ENCODE measurements at regions of chr10 and their contacts with region 1.

Region 1: DNA sequence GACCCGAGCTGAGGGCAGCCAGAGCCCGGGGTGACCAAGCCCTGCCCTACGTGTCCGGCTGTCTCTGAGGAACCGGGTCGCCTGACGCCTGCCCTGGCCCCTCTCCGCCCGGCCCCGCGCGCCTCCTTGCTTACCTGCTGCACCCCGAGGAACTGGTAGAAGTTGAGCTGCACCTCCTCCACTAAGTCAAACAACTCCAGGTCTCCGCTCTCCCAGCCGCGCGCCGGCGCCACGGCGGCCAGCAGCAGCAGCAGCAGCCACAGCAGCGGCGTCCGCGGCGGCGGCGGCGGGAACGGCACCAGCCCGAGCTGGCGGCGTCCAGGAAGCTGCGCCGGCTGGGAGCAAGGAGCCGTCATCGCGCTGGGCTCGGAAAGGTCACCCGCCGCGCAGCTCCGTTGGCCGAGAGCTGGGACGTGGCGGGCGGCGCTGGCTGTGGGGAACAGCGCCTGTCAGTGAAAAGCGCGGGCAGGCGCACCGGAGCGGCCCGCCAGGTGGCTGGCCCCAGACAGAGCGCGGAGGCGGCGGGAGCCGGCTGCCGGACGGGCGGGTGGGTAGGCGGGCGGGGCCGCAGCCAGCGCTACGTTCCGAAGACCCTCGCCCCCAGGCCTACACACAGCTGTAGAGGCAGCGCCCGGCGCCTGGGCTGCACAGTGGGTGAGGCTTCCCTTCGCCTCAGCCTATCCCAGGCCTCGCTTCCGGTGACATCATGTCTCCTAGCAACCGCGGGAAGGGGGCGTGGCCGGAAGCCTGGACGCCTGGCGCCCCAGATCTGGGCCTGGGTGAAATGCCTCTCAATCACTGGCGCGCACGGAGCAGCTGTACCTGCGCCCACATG is at the start of gene DNAJC1:
- DNase-seq: peak; percentile 98
- H3K4me3 ChIP-seq: peak within 1 kb of the TSS; percentile 94
- H3K27ac ChIP-seq: peak within 1 kb of the TSS; percentile 90
- H3K4me1 ChIP-seq: peaks cover 17% of the 10 kb centered on the region
- H3K27me3 ChIP-seq: no peaks in the 10 kb centered on the region
- total RNA-seq, gene DNAJC1: 50.9 and 218 TPM in 2 replicates

Region 2: DNA sequence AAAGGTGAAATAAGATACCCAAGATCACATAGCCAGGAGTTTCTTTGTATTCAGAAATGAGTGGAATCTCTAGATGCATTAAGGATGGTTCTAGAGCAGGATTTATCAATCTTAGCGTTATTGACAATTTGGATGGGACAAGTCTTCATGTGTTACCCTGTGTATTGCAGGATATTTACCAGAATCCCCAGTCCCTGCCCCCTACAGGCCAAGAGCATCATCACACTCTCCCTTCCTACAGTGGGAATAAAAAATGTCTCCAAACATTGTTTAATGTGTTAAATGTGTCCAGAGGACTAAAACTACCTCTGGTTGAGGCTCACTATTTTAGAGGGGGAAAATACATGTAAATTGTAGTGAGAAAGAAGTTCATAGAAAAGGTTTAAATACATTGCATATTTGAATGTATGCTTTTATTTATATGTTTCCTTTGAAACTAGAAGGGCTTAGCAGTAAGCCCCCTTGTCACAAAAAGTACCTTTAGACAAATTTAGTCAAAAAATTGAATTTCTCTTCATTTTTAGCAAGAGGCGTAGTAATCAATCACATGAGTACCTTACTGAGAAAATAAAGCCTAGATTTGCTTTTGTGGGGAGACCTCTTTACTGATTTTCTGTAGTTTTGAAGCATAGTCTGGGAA is 328.0 kb before region 1 on chr10:
- in situ Hi-C with region 1: no loop called
- DNase-seq: peak; percentile 51
- H3K4me3 ChIP-seq: no peak overlapping the region
- H3K27ac ChIP-seq: no peak overlapping the region
- H3K4me1 ChIP-seq: no peaks in the 10 kb centered on the region
- H3K27me3 ChIP-seq: no peaks in the 10 kb centered on the region

Region 3: DNA sequence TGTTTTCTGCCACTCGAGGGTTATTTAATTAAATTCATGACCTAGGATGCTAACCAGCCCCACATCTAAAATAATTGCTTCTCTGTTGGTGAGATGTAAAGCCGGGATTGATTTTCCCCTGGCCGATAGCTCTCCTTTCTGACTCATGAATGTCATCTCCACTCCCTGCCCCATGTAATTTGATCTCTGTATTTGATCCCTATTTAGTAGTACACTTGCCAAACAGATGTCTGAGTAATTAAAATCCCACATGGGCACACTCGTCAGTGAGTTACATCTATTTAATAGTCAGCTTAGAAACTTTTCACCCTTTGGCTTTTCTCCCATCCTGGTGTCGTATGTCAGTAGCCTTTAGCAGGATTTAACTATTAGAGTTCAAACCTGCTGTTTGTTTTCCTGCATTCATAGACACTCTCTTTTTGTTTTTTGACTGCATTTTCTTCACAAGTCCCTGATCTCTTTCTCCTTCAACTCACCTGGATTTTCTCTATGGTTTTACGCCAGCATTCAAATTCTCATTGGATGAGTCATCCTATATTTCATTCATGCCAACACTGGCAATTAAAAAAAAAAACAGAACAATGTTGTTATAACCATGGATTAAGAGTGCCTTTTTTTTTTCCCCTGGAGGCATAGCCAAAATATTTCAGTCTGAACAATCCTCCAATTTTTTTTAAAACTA is 424.7 kb after region 1 on chr10:
- in situ Hi-C with region 1: loop called (anchors 10 kb)
- DNase-seq: peak; percentile 91
- H3K4me3 ChIP-seq: peak overlapping the region; percentile 33
- H3K27ac ChIP-seq: peak overlapping the region; percentile 16
- H3K4me1 ChIP-seq: peaks cover 29% of the 10 kb centered on the region
- H3K27me3 ChIP-seq: no peaks in the 10 kb centered on the region

Region 4: GRCh38 chr10:22550732-22551131 is 547.4 kb after region 1 on chr10:
- in situ Hi-C with region 1: loop called (anchors 25 kb)
- DNase-seq: peak; percentile 40
- H3K4me3 ChIP-seq: no peak overlapping the region
- H3K27ac ChIP-seq: no peak overlapping the region
- H3K4me1 ChIP-seq: peaks cover 11% of the 10 kb centered on the region; the same call in 1 of the 2 replicates
- H3K27me3 ChIP-seq: no peaks in the 10 kb centered on the region

Region 5: DNA sequence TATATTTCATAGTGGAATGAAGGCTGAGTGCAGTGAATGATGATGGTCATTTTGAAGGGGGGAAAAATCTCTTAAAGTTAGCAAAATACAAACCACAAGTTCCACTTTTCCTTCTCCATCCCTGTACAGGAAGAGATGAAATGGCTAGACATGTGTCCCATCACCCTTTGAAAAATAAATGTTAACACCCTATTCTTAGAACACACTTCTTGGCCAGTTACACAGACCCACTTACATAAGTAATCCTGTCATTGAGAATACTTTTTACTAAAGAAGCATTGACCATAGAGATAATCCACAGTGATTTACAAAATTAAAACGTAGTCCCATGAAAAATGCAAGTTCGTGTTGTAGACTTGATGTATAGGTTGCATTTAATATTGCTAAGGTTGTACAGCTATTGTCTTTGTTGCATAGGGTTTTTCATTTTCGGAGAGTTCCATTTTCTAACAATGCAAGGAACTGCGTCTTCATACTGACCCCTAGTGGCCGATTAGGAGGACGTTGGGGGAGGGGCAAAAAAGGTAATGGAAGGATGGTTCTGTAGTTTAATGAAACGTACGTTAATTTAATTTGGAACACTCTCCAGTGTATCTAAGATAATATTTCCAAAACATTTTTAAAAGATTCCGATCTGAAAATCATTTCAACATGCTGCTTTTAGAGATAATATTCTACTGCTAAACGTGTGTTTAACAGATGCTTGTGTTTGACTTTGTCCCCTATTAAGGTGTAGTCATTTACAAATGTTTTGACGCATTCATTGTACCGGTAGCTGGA is 985.5 kb after region 1 on chr10:
- in situ Hi-C with region 1: loop called (anchors 10 kb)
- DNase-seq: peak; percentile 78
- H3K4me3 ChIP-seq: no peak overlapping the region
- H3K27ac ChIP-seq: no peak overlapping the region
- H3K4me1 ChIP-seq: no peaks in the 10 kb centered on the region
- H3K27me3 ChIP-seq: no peaks in the 10 kb centered on the region